Natural killer cell (primary cell): ENCODE measurements at regions of chr10 and their contacts with region 1.

Region 1: DNA sequence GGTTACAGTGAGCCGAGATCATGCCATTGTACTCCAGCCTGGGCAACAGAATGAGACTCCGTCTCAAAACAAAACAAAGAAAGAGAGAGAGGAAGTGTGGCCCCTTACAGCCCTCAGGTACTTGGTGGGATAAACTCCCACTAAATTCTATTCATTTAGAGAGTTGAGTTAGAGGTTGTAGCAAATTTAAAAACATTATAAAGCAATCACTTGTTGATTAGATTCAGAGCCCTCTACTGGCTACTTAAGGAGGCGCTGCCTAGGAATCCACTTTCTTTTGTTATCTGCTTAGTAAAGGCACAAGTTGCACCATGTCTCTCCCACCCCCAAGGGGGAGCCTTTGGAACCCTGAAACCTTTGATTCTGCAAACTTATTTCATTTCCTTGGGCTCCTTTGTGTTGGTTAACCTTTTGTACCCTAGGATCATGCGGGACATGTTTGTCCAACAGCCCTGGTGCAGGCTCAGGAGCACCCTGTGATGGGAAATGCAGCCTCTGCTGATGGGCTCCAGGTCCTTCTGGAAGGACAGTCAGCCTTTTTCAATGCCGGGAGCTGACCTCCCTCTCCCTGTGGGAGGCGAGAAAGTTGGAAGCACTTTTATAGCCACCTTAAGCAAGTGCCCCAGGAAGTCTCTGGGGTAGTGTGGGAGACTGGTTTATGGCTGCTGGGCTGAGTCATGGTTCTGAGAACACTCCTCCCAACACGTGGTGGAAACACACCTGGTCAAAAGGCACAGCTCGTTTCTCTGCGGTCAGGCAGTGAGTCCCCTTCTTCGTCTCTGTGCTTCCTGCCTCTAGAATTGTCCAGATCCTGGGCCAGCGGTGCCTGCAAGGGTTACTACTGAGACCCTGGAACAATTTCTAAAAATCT is 2.3 kb downstream of the HKDC1 start:
- DNase-seq: peak; percentile 74 to 79
- ATAC-seq: peak; percentile 89 to 93 (median 92)
- H3K4me3 ChIP-seq: peak overlapping the region; percentile 2
- H3K4me3 Mint-ChIP-seq: peak overlapping the region; percentile 69
- H3K27ac ChIP-seq: peak overlapping the region; percentile 38
- H3K27ac Mint-ChIP-seq: peak overlapping the region; percentile 74 to 93
- H3K4me1 ChIP-seq: peaks cover 44% of the 10 kb centered on the region
- H3K4me1 Mint-ChIP-seq: peaks cover 36 to 53% of the 10 kb centered on the region in 2 donors
- H3K27me3 ChIP-seq: no peaks in the 10 kb centered on the region
- H3K27me3 Mint-ChIP-seq: no peaks in the 10 kb centered on the region
- CTCF ChIP-seq: peak; percentile 49

Region 2: DNA sequence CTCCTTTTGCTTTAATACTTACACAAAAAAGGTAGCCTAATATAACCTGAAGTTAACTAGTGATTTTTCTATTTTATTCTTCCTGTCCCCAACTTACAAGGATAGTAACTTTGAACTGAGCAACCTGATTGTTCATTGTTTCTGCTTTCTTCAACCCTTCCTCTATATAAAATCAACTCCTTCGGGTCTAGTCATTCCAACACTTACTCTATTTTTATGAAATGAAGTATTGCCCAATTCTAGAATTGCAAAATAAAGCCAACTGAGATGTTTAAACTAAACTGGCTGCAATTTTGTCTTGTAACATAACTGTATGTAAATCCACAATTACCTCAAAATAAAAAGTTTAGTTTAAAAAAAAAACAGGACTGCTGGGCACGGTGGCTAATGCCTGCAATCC is 730.3 kb before region 1 on chr10:
- intact Hi-C with region 1: no loop called
- DNase-seq: no peak
- ATAC-seq: no peak
- H3K4me3 ChIP-seq: no peak overlapping the region
- H3K4me3 Mint-ChIP-seq: no peak overlapping the region
- H3K27ac ChIP-seq: no peak overlapping the region
- H3K27ac Mint-ChIP-seq: no peak overlapping the region
- H3K4me1 ChIP-seq: no peaks in the 10 kb centered on the region
- H3K4me1 Mint-ChIP-seq: no peaks in the 10 kb centered on the region
- H3K27me3 ChIP-seq: no peaks in the 10 kb centered on the region
- H3K27me3 Mint-ChIP-seq: no peaks in the 10 kb centered on the region
- CTCF ChIP-seq: no peak

Region 3: GRCh38 chr10:69092959-69093850 is 129.2 kb before region 1 on chr10:
- intact Hi-C with region 1: loop called (anchors 2 kb)
- DNase-seq: peak; percentile 73 to 94
- ATAC-seq: peak; percentile 29 to 72 (median 50)
- H3K4me3 ChIP-seq: no peak overlapping the region
- H3K4me3 Mint-ChIP-seq: peak overlapping the region; percentile 89
- H3K27ac ChIP-seq: peak overlapping the region; percentile 90
- H3K27ac Mint-ChIP-seq: peak overlapping the region; percentile 96
- H3K4me1 ChIP-seq: peaks cover 70% of the 10 kb centered on the region
- H3K4me1 Mint-ChIP-seq: peaks cover 70 to 74% of the 10 kb centered on the region in 2 donors
- H3K27me3 ChIP-seq: no peaks in the 10 kb centered on the region
- H3K27me3 Mint-ChIP-seq: no peaks in the 10 kb centered on the region
- CTCF ChIP-seq: peak; percentile 87

Region 4: DNA sequence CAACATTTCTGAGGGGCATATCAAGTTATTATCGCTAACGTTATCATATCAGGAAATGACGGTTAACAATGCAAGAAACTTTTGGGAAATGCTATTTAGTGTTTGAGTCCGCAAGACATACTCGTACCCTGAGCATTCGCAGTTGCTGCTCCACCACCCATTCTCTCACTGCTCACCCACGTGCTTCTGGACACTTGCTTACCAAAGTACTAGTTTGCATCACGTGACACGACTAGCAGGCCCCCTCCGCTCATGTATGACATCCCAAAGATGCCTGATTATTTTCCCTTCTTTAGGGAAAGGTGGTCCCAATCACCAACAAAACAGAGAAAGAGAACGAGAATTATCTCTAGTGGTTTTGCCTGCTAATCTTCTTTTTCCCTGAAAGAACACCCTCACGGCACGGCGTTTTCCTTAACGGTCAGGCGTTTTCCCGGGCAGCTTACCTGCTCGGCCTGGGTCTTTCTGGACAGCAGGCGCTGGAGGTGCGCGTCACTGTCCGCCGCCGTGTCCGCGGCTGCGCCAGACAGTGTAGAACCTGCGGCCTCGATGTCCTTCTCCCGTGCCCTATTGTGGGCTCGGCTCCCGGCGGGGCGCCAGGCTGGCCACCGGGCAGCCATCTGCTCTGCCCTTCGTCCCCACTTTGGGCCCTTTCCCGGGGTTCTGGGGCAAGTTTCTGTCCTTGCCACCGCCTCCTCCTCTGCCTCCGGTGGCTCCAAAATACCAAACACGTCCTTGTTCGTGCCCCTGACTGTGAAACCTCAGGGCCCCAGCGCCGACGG is 42.5 kb before region 1 on chr10 and contains the start of gene SUPV3L1:
- intact Hi-C with region 1: loop called (anchors 1 kb)
- DNase-seq: peak; percentile 90 to 95
- ATAC-seq: peak; percentile 75 to 89 (median 81)
- H3K4me3 ChIP-seq: peak within 1 kb of the TSS; percentile 86
- H3K4me3 Mint-ChIP-seq: peak within 1 kb of the TSS; percentile 95
- H3K27ac ChIP-seq: peak within 1 kb of the TSS; percentile 92
- H3K27ac Mint-ChIP-seq: peak within 1 kb of the TSS; percentile 98 to 99
- H3K4me1 ChIP-seq: peaks cover 19% of the 10 kb centered on the region
- H3K4me1 Mint-ChIP-seq: peaks cover 44 to 58% of the 10 kb centered on the region in 2 donors
- H3K27me3 ChIP-seq: no peaks in the 10 kb centered on the region
- H3K27me3 Mint-ChIP-seq: no peaks in the 10 kb centered on the region
- CTCF ChIP-seq: no peak
- total RNA-seq, gene SUPV3L1: 56.6 to 104 (median 67.1) TPM

Region 5: GRCh38 chr10:69202332-69202731 is 20.1 kb before region 1 on chr10:
- intact Hi-C with region 1: loop called (anchors 1 kb)
- DNase-seq: peak in 1 of 2 donors; percentile 68
- ATAC-seq: peak; percentile 47 to 75 (median 55)
- H3K4me3 ChIP-seq: no peak overlapping the region
- H3K4me3 Mint-ChIP-seq: peak overlapping the region; percentile 40
- H3K27ac ChIP-seq: peak overlapping the region; percentile 57
- H3K27ac Mint-ChIP-seq: peak overlapping the region; percentile 61 to 82
- H3K4me1 ChIP-seq: peaks cover 42% of the 10 kb centered on the region
- H3K4me1 Mint-ChIP-seq: peaks cover 34 to 49% of the 10 kb centered on the region in 2 donors
- H3K27me3 ChIP-seq: no peaks in the 10 kb centered on the region
- H3K27me3 Mint-ChIP-seq: no peaks in the 10 kb centered on the region
- CTCF ChIP-seq: no peak

Region 6: DNA sequence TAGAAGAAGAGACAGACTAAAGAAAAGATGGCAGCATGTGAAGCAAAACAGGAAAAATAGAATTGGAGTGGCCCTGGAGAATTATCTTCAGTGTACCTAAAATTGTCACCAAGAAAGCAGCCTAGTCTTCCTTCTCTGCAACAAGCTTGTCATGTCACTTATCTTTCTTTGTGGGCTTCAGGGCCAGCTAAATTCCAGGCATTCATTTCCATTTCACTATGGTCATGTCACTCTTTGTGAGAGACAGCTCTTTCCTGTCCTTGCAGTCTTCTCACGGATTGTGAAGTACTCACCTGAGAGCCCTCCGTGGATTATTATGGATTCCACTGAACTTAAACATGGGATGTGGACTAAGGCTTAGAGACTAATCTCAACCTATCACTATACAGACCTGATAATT is 11.3 kb before region 1 on chr10:
- intact Hi-C with region 1: loop called (anchors 1 kb)
- DNase-seq: no peak
- ATAC-seq: no peak
- H3K4me3 ChIP-seq: no peak overlapping the region
- H3K4me3 Mint-ChIP-seq: no peak overlapping the region
- H3K27ac ChIP-seq: no peak overlapping the region
- H3K27ac Mint-ChIP-seq: no peak overlapping the region
- H3K4me1 ChIP-seq: peaks cover 24% of the 10 kb centered on the region
- H3K4me1 Mint-ChIP-seq: peaks cover 53 to 64% of the 10 kb centered on the region in 2 donors
- H3K27me3 ChIP-seq: no peaks in the 10 kb centered on the region
- H3K27me3 Mint-ChIP-seq: no peaks in the 10 kb centered on the region
- CTCF ChIP-seq: no peak